Dendritic cell treated with granulocyte-macrophage colony-stimulating factor and Interleukin-4, amounts not matched to agents 40 ng/mL and 50 ng/mL, for 4 days (primary cell): ENCODE measurements at regions of chr2 and their contacts with region 1.

Region 1: GRCh38 chr2:164717000-164717803 is 95.9 kb upstream of the GRB14 start:
- H3K4me3 Mint-ChIP-seq: no peak overlapping the region
- H3K27ac Mint-ChIP-seq: no peak overlapping the region
- H3K4me1 Mint-ChIP-seq: peaks cover 5% of the 10 kb centered on the region
- H3K27me3 Mint-ChIP-seq: no peaks in the 10 kb centered on the region

Region 2: GRCh38 chr2:163171786-163172531 is 1545.2 kb before region 1 on chr2:
- intact Hi-C with region 1: loop called (anchors 10 kb)
- H3K4me3 Mint-ChIP-seq: no peak overlapping the region
- H3K27ac Mint-ChIP-seq: no peak overlapping the region
- H3K4me1 Mint-ChIP-seq: no peaks in the 10 kb centered on the region
- H3K27me3 Mint-ChIP-seq: peaks cover 3% of the 10 kb centered on the region

Region 3: DNA sequence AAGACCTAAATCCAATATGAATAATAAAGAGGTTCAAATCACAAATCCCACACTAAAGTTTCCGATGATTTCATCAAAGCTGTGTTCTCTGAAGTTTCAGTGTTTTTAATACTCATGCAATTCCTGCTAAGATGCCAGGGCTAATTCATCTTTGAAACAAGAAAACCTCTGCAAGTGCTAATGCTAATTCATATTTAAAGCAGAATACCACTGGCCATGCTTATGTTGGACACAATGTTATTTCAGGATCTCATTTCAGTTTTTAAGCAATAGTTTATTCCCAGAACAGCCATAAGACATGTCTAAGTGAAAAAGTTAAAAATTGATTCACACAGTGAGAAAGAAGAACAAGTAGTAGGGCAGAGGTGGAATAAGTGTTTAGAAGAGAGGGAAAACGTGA is 158.8 kb before region 1 on chr2:
- intact Hi-C with region 1: loop called (anchors 2 kb)
- H3K4me3 Mint-ChIP-seq: no peak overlapping the region
- H3K27ac Mint-ChIP-seq: no peak overlapping the region
- H3K4me1 Mint-ChIP-seq: no peaks in the 10 kb centered on the region
- H3K27me3 Mint-ChIP-seq: no peaks in the 10 kb centered on the region

Region 4: GRCh38 chr2:164620873-164621626 is 96.2 kb before region 1 on chr2 and contains the start of gene GRB14:
- intact Hi-C with region 1: no loop called
- H3K4me3 Mint-ChIP-seq: peak within 1 kb of the TSS; percentile 50
- H3K27ac Mint-ChIP-seq: no peak within 1 kb of the TSS
- H3K4me1 Mint-ChIP-seq: no peaks in the 10 kb centered on the region
- H3K27me3 Mint-ChIP-seq: peaks cover 41% of the 10 kb centered on the region